Mammary epithelial cell (primary cell): ENCODE measurements at regions of chr16 and their contacts with region 1.

Region 1: DNA sequence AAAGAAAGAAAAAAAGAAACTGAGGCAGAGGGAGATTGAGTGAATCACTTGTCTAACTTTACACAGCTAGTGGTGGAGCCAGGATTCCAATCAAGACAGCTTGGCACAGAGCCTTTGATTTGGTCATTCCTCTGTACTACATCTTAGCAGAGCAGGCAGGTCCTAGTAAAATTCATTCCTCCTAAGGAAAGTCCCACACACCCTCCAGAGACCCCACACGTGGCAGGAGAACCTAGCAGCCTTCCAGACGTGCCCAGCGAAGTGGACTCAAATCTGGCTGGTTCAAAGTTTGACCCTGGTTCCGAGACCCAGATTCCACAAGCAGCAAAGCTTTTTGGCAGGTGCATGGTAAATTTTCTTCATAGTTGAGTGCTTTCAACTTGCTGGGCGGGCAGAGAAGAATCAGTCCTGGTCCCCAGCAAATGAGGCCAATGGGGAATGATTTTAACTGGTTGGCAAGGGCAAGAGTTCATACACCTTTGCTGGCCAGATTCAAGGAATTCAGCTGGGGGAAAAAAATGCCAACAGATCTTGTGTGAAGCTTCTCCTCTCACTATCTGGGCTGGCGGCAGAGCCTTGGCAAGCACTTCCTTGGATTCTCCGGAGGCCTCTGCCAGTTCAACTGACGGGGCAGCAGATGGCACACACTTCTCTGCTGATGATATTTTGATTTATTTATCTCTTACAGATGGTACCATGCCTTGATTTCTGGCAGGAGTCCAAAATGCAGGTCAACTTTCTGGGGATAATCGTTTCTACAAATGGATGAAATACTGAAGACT is 82.4 kb downstream of the GSG1L start:
- DNase-seq: no peak
- H3K4me3 ChIP-seq: no peak overlapping the region
- H3K27ac ChIP-seq: no peak overlapping the region
- H3K4me1 ChIP-seq: no peaks in the 10 kb centered on the region
- H3K27me3 ChIP-seq: no peaks in the 10 kb centered on the region
- CTCF ChIP-seq: no peak

Region 2: GRCh38 chr16:27769561-27770255 is 211.4 kb before region 1 on chr16:
- CTCF ChIA-PET with region 1: no interaction called
- dilution Hi-C with region 1: loop called (anchors 10 kb)
- in situ Hi-C with region 1: no loop called
- intact Hi-C with region 1: no loop called
- DNase-seq: peak; percentile 71
- H3K4me3 ChIP-seq: no peak overlapping the region
- H3K27ac ChIP-seq: peak overlapping the region; percentile 12
- H3K4me1 ChIP-seq: peaks cover 20% of the 10 kb centered on the region
- H3K27me3 ChIP-seq: no peaks in the 10 kb centered on the region
- CTCF ChIP-seq: peak in 1 of 2 donors; percentile 7

Region 3: DNA sequence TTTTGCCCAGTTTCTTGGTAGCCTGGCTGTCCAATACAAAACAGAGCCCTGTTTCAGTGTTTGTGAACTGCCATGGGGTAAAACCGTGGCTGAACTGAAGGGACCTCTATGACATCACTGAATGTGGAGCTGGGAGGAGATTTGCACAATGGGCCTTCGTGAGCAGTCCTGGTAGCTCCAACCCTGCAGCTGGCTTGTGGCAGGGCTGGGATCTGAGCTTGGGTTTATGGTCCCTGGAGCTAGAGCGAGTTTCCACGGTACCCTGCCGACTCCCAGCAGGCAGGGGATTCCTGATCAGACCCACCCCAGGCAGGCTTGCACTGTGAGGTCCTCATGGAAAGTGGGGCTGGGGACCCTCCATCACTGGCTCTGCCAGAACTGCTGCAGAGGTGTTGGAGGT is 164.5 kb before region 1 on chr16:
- CTCF ChIA-PET with region 1: no interaction called
- dilution Hi-C with region 1: loop called (anchors 5 kb)
- in situ Hi-C with region 1: no loop called
- intact Hi-C with region 1: no loop called
- DNase-seq: no peak
- H3K4me3 ChIP-seq: no peak overlapping the region
- H3K27ac ChIP-seq: no peak overlapping the region
- H3K4me1 ChIP-seq: no peaks in the 10 kb centered on the region
- H3K27me3 ChIP-seq: no peaks in the 10 kb centered on the region
- CTCF ChIP-seq: no peak

Region 4: DNA sequence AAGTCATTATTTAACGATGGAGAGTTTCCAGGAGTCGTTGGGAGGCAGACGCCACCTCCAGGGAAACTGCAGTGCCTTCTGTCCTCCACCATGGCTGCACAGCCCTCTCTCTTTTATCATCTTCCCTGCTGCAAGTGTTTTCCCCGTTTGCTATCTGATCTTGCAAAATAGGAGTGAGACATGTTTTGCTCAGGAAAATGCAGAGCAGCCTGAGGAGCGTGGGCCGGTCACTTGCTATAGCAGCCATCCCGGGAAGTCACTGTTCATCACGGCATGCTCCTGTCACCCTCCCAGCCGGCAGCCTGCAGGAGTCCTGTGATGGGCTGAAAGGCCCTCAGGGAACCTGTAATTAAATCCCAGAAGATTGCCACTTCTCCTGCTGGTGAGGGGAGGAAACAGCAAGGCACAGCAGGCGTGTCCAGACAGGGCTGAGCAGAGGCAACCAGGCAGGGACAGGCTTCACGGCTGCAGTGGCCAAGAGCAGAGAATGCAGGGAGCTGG is 60.7 kb before region 1 on chr16:
- CTCF ChIA-PET with region 1: no interaction called
- dilution Hi-C with region 1: loop called (anchors 5 kb)
- in situ Hi-C with region 1: no loop called
- intact Hi-C with region 1: no loop called
- DNase-seq: peak; percentile 52
- H3K4me3 ChIP-seq: no peak overlapping the region
- H3K27ac ChIP-seq: no peak overlapping the region
- H3K4me1 ChIP-seq: peaks cover 8% of the 10 kb centered on the region
- H3K27me3 ChIP-seq: no peaks in the 10 kb centered on the region
- CTCF ChIP-seq: peak; percentile 59 to 66

Region 5: DNA sequence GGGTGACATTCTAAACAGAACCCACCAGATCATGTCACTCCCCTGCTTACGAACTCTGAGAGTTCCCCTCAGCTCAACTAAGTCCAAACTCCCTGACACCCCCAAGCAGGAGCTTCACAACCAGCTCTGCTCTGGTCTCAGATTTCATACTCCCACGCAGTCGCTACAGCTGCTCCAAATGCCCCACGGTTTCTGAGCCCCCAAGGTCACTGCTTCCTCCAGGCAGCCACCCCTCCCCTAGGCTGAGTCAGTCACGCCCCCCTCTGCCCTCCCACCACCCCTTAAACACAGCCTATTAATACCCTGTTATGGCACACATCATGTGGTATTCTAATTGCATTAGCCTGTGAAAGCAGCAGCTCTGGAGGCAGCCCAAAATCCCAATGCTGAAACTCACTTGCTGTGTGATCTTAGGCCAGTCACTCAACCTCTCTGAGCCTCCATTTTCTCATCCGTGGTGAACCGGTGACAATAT is 30.9 kb after region 1 on chr16:
- CTCF ChIA-PET with region 1: no interaction called
- dilution Hi-C with region 1: no loop called
- in situ Hi-C with region 1: no loop called
- intact Hi-C with region 1: no loop called
- DNase-seq: no peak
- H3K4me3 ChIP-seq: no peak overlapping the region
- H3K27ac ChIP-seq: no peak overlapping the region
- H3K4me1 ChIP-seq: no peaks in the 10 kb centered on the region
- H3K27me3 ChIP-seq: peaks cover 2% of the 10 kb centered on the region
- CTCF ChIP-seq: no peak

Region 6: DNA sequence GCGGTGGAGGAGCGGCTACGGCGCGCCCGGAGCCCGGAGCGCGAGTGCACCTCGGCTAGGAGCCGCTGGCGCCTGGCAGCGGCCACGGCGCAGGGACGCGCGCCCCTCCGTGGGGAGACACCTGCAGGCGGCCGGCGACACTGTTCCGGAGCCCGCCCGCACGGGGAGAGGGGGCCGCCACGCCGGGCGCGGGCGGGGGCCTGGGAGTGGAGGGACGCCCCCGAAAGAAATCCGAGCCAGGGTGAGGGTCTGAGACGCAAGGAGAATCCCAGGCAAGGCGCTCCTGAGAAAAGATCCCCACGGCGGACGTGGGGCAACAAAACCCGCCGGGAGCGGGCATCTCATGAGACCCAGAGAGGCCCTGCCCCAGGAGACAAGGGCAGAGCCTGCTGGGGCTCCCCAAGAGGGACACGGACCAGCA is 82.5 kb after region 1 on chr16 and contains the start of gene GSG1L:
- CTCF ChIA-PET with region 1: no interaction called
- dilution Hi-C with region 1: loop called (anchors 5 kb)
- in situ Hi-C with region 1: no loop called
- intact Hi-C with region 1: no loop called
- DNase-seq: no peak
- H3K4me3 ChIP-seq: no peak within 1 kb of the TSS
- H3K27ac ChIP-seq: no peak within 1 kb of the TSS
- H3K4me1 ChIP-seq: no peaks in the 10 kb centered on the region
- H3K27me3 ChIP-seq: peaks cover 31% of the 10 kb centered on the region
- CTCF ChIP-seq: no peak
- total RNA-seq, gene GSG1L: not detected